Right ventricle myocardium inferior (tissue), 1 donor: ENCODE measurements at regions of chr10 and their contacts with region 1.

Region 1: DNA sequence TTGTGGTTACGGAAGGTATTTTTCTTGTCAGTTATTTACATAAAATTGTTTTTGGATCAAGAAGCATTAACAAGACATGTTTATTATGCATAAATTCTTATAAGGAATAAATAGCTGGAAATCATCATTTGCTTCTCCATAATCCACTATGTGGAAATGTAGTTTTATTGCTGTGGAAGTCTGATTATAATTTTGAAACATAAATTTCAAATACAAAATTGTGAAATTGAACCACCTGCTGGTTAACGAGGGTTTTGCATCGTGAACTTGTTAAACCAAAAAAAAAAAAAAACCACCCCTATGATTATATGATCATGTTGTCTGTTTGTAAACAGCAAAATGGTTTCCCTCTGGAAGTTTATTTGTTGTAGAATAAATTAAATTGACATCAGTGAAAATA is 25.9 kb downstream of the ABRAXAS2 start:
- DNase-seq: no peak
- ATAC-seq: no peak

Region 2: DNA sequence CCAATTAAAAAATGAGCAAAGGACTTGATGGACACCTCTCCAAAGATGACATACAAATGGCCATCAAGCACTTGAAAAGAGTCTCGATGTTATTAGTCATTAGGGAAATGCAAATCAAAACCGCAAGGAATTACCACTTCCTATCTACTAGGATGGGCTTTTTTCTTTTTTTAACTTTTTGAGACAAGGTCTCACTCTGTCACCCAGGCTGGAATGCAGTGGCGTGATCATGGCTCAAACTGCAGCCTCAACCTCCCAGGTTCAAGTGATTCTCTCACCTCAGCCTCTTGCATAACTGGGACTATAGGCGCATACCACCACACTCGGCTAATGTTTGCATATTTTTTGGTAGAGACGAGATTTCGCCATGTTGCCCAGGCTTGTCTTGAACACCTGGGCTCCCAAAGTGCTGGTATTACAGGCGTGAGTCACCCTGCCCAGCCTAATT is 391.3 kb before region 1 on chr10:
- intact Hi-C with region 1: no loop called
- DNase-seq: no peak
- ATAC-seq: no peak

Region 3: DNA sequence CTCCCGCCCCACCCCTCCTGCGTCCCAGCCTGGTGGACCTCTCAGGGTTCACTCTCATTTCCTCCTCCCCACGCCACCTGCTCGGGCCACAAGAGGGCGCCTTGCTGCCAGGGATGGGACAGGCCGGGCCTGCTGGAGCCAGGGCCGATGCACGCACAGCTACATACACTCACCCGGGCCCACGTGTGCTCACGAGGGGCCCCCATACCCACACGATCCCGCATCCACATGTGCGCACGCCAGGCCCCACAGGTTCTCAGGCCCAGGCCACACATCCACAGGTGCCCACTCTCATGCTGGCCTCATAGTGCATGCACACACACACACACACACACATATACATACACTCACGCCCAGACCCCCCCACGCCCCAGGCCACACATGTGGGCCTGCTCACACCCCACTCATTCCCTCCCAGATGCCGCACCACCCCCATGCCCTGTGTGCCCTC is 297.2 kb before region 1 on chr10:
- intact Hi-C with region 1: loop called (anchors 5 kb)
- DNase-seq: peak; percentile 95
- ATAC-seq: peak; percentile 81